PC-9 (cell line): ENCODE measurements at regions of chr15 and their contacts with region 1.

Region 1: GRCh38 chr15:56496635-56497034 is 31.7 kb upstream of the MNS1 start:
- DNase-seq: no peak
- H3K4me3 ChIP-seq: no peak overlapping the region
- H3K27ac ChIP-seq: no peak overlapping the region
- H3K4me1 ChIP-seq: no peaks in the 10 kb centered on the region; the same call in 1 of the 2 replicates
- H3K27me3 ChIP-seq: no peaks in the 10 kb centered on the region
- CTCF ChIP-seq: peak; percentile 66

Region 2: GRCh38 chr15:56672721-56673120 is 176.1 kb after region 1 on chr15:
- CTCF ChIA-PET with region 1: no interaction called
- POLR2A ChIA-PET with region 1: no interaction called
- intact Hi-C with region 1: no loop called
- DNase-seq: no peak
- H3K4me3 ChIP-seq: no peak overlapping the region
- H3K27ac ChIP-seq: no peak overlapping the region
- H3K4me1 ChIP-seq: no peaks in the 10 kb centered on the region
- H3K27me3 ChIP-seq: no peaks in the 10 kb centered on the region
- CTCF ChIP-seq: no peak

Region 3: GRCh38 chr15:57306161-57306943 is 809.7 kb after region 1 on chr15:
- CTCF ChIA-PET with region 1: interaction called, 6 read pairs
- POLR2A ChIA-PET with region 1: no interaction called
- intact Hi-C with region 1: loop called (anchors 1 kb)
- DNase-seq: peak in 1 of 2 experiments; percentile 78
- H3K4me3 ChIP-seq: no peak overlapping the region; the same call in 1 of the 2 replicates
- H3K27ac ChIP-seq: no peak overlapping the region
- H3K4me1 ChIP-seq: no peaks in the 10 kb centered on the region
- H3K27me3 ChIP-seq: no peaks in the 10 kb centered on the region
- CTCF ChIP-seq: peak; percentile 78

Region 4: GRCh38 chr15:57541805-57542504 is 1045.3 kb after region 1 on chr15:
- CTCF ChIA-PET with region 1: interaction called, 5 read pairs
- POLR2A ChIA-PET with region 1: no interaction called
- intact Hi-C with region 1: loop called (anchors 5 kb)
- DNase-seq: peak in 1 of 2 experiments; percentile 70
- H3K4me3 ChIP-seq: no peak overlapping the region
- H3K27ac ChIP-seq: no peak overlapping the region
- H3K4me1 ChIP-seq: no peaks in the 10 kb centered on the region
- H3K27me3 ChIP-seq: no peaks in the 10 kb centered on the region
- CTCF ChIP-seq: peak; percentile 81

Region 5: DNA sequence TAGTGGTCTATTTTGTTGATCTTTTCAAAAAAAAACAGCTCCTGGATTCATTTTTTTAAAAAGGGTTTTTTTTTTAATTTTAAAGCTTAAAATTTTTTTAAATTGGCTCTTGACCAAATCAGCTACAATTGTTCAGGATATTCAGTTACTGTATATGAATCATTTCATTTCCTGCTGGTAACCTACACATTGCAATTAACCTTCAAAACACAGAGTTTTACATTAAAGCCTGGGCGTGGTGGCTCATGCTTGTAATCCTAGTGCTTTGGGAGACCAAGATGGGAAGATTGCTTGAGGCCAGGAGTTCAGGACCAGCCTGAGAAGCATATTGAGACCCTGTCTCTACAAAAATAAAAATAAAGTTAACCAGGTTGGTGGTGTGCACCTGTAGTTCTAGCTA is 1405.5 kb after region 1 on chr15:
- CTCF ChIA-PET with region 1: no interaction called
- POLR2A ChIA-PET with region 1: no interaction called
- intact Hi-C with region 1: no loop called
- DNase-seq: no peak
- H3K4me3 ChIP-seq: no peak overlapping the region
- H3K27ac ChIP-seq: no peak overlapping the region
- H3K4me1 ChIP-seq: no peaks in the 10 kb centered on the region
- H3K27me3 ChIP-seq: 0 out of 2 replicates have a peak, but pooled peaks cover 6% of the 10 kb centered on the region
- CTCF ChIP-seq: no peak